Heart right ventricle (tissue), 16 donors: ENCODE measurements at regions of chr1 and their contacts with region 1.

Region 1: DNA sequence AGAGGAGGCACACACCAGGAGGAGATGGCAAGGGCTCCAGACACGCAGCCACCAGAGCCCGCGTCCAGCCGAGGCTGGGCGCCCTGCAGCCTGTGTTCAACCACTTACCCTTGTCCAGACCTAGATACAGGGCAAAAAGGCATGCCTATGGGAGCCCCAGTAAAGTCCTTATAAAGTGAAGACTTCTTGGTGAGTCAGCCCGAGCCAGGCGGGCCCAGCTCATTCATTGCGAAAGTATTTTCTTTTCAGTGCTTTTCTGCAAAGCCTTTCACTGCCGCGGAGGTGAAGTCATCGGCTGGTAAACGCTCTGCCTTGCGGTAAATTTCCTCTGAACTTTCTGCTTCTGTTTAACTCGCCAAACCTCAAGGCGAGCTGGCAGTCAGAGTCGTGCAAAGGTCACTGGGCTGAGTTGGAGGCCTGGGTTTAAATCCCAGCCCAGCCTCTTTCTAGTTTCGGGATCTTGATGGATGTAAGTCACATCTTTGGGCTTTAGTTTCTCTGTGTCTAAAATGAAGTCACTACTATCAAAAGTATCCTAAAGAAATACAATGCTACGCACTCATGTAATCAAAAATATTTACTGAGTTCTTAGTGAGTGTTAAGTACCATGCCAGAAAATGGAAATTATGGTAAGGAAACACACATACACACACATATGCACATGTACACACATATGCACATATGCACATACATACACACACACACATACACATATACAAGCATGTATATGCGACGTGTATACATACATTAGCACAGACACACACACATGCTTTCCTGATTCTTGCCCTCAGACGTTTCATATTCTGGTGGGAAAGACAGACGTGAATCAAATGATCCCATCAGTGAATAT is 54.7 kb upstream of the IFFO2 start:
- DNase-seq: peak in 1 of 2 donors; percentile 35
- ATAC-seq: peak in 7 of 8 donors; percentile 27 to 84 (median 49)
- H3K4me3 ChIP-seq: no peak overlapping the region
- H3K27ac ChIP-seq: peak overlapping the region in 1 of 10 donors; percentile 42
- H3K4me1 ChIP-seq: peaks cover 0 to 23% (median 6%) of the 10 kb centered on the region in 9 donors
- H3K27me3 ChIP-seq: peaks cover 0 to 20% (median 5%) of the 10 kb centered on the region in 7 donors
- CTCF ChIP-seq: no peak

Region 2: GRCh38 chr1:19087737-19088594 is 76.7 kb after region 1 on chr1:
- intact Hi-C with region 1: loop called in 2 of 10 experiments (anchors 5 to 10 kb)
- DNase-seq: no peak
- ATAC-seq: no peak
- H3K4me3 ChIP-seq: no peak overlapping the region
- H3K27ac ChIP-seq: no peak overlapping the region
- H3K4me1 ChIP-seq: peaks cover 0 to 31% (median 11%) of the 10 kb centered on the region in 9 donors
- H3K27me3 ChIP-seq: no peaks in the 10 kb centered on the region
- CTCF ChIP-seq: no peak